Activated naive CD4-positive, alpha-beta T cell treated with anti-CD3 and anti-CD28 coated beads for 36 hours (primary cell): ENCODE measurements at regions of chr19 and their contacts with region 1.

Region 1: DNA sequence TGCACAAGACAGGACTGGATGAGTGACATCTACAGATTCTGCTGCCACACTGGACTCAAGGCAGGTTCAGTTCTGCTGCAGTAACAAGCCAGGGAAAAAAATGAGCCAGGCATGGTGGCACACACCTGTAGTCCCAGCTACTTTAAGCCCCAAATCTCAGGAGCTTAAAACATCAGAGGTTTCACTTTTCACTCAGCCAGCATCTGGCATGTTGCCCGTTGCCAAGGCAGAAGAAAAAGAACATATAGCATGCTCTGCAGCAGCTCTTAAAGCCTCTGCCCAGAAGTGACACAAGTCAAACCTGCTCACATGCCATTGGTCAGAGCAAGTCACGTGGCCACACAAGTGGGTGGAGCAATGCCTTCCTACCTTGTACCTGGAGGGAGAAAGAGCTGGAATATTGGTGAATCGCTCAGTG is 14.7 kb upstream of the ADGRE5 start:
- DNase-seq: peak; percentile 99
- H3K4me3 Mint-ChIP-seq: peak overlapping the region; percentile 75
- H3K27ac Mint-ChIP-seq: peak overlapping the region; percentile 100
- H3K4me1 Mint-ChIP-seq: peaks cover 78% of the 10 kb centered on the region
- H3K27me3 Mint-ChIP-seq: no peaks in the 10 kb centered on the region

Region 2: DNA sequence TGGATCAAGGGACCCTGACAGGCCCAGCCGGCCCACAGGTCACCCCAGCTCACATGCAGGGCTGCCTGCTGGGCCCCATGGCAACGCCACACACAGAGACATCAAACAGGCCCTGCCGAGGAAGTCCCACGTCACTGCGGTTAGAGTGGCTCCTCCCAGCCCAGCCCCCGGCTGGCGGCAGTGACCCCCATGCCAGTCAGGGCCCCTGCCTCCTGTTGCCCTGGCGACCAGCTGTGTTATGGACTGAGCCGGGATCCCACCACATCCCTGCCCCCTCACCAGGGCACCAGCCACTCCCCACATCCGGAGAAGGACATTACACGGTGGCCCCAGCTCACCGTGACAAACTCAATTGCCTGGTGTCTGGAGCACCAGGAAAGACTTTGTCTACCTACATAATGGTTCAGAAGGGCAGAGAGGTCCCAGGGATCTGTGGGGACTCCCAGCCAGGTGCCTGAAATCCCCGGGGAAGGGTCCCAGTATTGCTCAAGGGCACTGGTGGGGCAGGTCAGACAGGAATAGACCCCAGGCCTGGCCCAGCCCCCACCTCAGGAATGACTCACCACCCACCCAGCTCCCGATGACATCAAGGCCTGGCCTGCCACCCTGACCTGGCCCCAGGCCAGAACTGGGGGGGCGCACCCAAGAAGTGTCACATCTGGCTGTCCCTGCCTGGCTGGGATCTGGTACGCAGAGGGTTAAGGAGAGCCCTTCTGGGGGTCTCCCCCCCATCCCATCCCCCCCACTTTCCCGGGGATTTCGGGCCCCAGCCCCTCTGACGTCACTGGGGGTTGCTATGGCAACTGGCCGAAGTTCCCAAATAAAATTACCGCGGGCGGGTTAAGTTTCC is 519.7 kb before region 1 on chr19:
- CTCF ChIA-PET with region 1: no interaction called
- intact Hi-C with region 1: loop called (anchors 1 kb)
- DNase-seq: peak; percentile 97
- H3K4me3 Mint-ChIP-seq: peak overlapping the region; percentile 72
- H3K27ac Mint-ChIP-seq: peak overlapping the region; percentile 98
- H3K4me1 Mint-ChIP-seq: peaks cover 52% of the 10 kb centered on the region
- H3K27me3 Mint-ChIP-seq: no peaks in the 10 kb centered on the region

Region 3: DNA sequence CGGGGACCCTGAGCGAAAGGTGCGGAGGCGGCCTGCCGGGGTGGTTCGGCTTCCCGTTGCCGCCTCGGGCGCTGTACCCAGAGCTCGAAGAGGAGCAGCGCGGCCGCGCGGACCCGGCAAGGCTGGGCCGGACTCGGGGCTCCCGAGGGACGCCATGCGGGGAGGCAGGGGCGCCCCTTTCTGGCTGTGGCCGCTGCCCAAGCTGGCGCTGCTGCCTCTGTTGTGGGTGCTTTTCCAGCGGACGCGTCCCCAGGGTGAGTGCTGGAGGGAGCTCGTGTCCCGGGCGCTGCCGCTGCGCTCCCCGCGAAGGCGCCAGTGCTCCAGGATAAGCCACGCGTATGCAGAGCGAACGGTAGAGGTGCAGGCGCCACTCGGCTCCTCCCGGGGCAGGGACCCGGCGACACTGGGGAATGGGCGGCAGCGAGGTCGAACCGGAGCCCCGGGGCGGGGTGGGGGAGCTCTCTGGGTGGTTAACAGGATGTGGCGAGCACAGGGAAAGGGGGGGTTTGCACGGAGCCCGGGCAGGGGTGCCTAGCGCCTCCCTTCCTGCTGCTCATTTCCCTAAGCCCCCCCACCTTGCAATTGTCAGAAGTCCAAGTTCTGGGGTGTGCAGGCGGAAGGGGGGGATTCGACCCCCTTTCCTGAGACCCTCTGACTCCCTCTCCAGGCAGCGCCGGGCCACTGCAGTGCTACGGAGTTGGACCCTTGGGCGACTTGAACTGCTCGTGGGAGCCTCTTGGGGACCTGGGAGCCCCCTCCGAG is 334.6 kb before region 1 on chr19 and contains the start of gene IL27RA:
- CTCF ChIA-PET with region 1: no interaction called
- intact Hi-C with region 1: no loop called
- DNase-seq: peak; percentile 84
- H3K4me3 Mint-ChIP-seq: peak within 1 kb of the TSS; percentile 88
- H3K27ac Mint-ChIP-seq: peak within 1 kb of the TSS; percentile 92
- H3K4me1 Mint-ChIP-seq: peaks cover 26% of the 10 kb centered on the region
- H3K27me3 Mint-ChIP-seq: no peaks in the 10 kb centered on the region
- total RNA-seq, gene IL27RA: 59.3 to 59.4 TPM

Region 4: GRCh38 chr19:14248578-14249011 is 117.9 kb before region 1 on chr19:
- CTCF ChIA-PET with region 1: no interaction called
- intact Hi-C with region 1: no loop called
- DNase-seq: peak; percentile 61
- H3K4me3 Mint-ChIP-seq: peak overlapping the region; percentile 61
- H3K27ac Mint-ChIP-seq: peak overlapping the region; percentile 69
- H3K4me1 Mint-ChIP-seq: peaks cover 9% of the 10 kb centered on the region
- H3K27me3 Mint-ChIP-seq: no peaks in the 10 kb centered on the region

Region 5: DNA sequence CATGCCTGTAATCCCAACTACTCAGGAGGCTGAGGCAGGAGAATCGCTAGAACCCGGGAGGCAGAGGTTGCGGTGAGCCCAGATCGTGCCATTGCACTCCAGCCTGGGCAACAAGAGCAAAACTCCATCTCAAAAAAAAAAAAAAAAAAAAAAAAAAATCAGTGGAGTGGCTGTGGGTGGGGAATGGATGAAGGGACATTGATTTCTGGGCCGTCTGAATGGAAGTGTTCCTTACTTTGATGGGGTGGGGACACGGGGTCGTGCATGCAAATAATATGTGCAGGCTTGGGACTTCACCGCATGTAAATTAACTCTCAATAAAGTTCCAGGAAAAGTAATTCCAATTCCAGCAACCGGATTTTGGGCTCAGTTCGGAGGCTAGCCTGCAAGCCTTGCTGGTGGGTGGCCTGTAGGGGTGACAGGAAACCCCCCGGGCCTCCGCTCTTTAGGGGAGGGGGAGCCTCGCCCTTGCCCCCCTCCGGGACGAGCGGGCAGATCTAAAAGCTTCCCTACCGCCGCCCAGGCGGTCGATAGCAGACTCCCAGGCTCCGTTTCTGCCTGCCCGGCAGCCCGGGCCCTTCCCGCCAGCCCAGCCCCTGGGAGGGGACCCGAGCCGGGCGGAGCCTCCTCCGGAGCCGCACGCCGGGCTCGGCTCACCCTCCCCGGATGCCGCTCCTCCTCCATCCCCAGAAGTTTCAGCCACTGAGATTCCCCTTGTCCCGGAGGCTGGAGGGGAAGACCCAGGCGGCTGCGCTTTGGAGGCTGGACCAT is 33.2 kb before region 1 on chr19:
- CTCF ChIA-PET with region 1: no interaction called
- intact Hi-C with region 1: no loop called
- DNase-seq: peak; percentile 24
- H3K4me3 Mint-ChIP-seq: peak overlapping the region; percentile 34
- H3K27ac Mint-ChIP-seq: no peak overlapping the region
- H3K4me1 Mint-ChIP-seq: peaks cover 15% of the 10 kb centered on the region
- H3K27me3 Mint-ChIP-seq: no peaks in the 10 kb centered on the region

Region 6: DNA sequence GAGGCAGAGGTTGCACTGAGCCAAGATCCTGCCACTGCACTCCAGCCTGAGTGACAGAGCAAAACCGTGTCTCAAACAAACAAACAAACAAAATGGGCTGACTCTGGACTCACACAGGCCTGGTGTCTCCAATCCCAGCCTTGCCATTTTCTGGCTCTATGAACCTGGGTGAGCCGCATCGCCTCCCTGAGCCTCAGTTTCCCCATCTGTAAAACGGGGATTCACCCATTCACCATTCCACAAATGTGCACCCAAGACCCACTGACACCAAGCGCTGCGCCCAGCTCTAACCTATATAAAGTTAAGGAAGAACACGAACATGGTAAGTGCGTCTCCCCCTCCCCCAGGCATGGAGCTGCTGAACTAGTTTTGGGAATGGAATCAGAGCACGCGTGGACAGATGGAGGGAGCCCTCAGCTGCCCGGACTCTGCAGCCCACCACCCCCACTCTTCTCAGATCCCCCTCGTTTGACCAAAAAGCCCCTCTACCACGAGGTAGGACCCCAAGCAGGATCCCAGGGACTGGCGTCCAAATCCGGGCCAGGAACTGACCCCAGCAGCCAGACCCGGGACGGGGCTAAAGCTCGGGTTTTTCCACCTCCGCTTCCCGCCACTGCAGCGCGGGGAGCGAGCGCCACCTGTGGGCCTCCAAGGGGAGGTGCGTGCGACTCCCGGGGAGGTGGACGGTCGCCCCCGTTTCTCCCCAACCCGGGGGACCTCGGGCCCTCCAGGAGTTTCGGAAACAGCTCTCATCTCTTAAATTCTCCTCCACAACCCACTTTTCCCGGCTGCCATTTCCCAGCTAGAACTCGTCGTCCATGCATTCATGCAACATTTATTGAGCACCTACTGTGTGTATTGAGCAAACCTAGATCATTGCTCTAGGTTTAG is 18.3 kb before region 1 on chr19:
- CTCF ChIA-PET with region 1: interaction called, 27 read pairs
- intact Hi-C with region 1: no loop called
- DNase-seq: peak; percentile 74
- H3K4me3 Mint-ChIP-seq: peak overlapping the region; percentile 43
- H3K27ac Mint-ChIP-seq: peak overlapping the region; percentile 79
- H3K4me1 Mint-ChIP-seq: peaks cover 20% of the 10 kb centered on the region
- H3K27me3 Mint-ChIP-seq: no peaks in the 10 kb centered on the region

Region 7: DNA sequence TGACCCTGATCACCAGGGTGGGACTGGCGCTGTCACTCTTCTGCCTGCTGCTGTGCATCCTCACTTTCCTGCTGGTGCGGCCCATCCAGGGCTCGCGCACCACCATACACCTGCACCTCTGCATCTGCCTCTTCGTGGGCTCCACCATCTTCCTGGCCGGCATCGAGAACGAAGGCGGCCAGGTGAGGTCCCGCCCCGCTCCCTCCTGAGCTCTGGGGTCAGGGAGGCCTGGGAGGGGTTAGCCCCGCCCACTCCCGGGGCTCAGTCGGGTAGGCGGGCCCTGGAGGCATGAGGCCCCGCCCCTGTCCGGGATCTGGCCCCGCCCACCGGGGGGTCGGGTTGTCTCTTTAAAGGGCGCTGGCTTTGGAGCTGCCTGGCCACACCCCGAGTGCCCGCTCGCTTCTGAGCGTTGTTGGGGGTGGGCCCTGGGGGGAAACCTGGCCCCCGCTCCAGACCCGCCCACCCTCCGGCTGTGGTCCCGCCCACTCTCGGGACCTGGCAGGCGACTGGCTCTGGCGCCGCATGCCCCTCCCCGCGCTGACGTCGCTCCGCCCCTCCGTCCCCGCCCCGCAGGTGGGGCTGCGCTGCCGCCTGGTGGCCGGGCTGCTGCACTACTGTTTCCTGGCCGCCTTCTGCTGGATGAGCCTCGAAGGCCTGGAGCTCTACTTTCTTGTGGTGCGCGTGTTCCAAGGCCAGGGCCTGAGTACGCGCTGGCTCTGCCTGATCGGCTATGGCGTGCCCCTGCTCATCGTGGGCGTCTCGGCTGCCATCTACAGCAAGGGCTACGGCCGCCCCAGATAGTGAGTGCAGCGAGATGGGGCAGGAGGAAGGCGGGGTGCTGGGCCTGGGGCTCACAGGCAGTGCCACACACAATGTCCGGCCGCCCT is 39.5 kb after region 1 on chr19:
- CTCF ChIA-PET with region 1: interaction called, 100 read pairs
- intact Hi-C with region 1: loop called (anchors 1 kb)
- DNase-seq: peak; percentile 91
- H3K4me3 Mint-ChIP-seq: no peak overlapping the region
- H3K27ac Mint-ChIP-seq: peak overlapping the region; percentile 46
- H3K4me1 Mint-ChIP-seq: peaks cover 26% of the 10 kb centered on the region
- H3K27me3 Mint-ChIP-seq: no peaks in the 10 kb centered on the region

Region 8: DNA sequence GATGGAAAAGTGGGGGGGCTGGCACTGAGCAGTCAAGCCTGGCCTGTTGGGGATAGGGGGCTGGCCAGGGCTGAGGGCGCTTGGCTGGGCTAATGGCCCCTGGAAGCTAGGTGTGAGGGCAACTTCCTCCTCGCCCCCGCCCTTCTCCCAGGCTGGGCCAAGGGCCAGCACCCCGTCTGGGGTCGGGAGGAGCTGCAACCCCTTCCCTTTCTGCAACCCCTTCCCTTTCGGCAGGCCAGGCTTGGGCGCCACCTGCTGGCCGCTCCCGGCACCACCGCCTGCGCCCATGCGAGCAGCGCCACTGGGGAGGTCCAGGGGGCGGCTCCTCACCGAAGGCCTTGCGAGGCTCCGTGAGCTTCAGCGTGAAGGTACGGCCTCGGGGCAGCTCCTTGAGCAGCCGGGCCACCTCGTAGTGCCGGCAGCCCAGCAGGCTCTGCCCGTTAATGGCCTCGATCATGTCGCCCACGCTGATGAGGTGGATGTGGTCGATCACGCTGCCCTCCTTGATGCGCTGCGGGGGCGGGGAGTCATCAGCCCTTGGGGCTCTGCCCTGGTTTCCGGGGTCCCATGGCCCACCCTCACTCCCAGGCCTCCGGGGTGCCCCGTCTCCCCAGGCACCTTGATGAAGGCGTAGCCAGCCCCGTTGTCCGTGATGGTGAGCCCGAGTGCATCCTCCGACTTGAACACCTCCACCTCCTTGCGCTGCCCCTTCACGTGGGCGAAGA is 113.6 kb after region 1 on chr19:
- CTCF ChIA-PET with region 1: interaction called, 10 read pairs
- intact Hi-C with region 1: no loop called
- DNase-seq: peak; percentile 74
- H3K4me3 Mint-ChIP-seq: no peak overlapping the region
- H3K27ac Mint-ChIP-seq: no peak overlapping the region
- H3K4me1 Mint-ChIP-seq: peaks cover 12% of the 10 kb centered on the region
- H3K27me3 Mint-ChIP-seq: peaks cover 3% of the 10 kb centered on the region